ENCODE measurements at regions of chr7 and their contacts with region 1.

Region 1: GRCh38 chr7:113664867-113665266 is 253.9 kb downstream of the PPP1R3A start:
- DNase-seq: no peak
- ATAC-seq: no peak
- H3K4me3 ChIP-seq: no peak overlapping the region
- H3K4me3 Mint-ChIP-seq: no peak overlapping the region
- H3K27ac ChIP-seq: no peak overlapping the region
- H3K27ac Mint-ChIP-seq: no peak overlapping the region
- H3K4me1 ChIP-seq: no peaks in the 10 kb centered on the region
- H3K4me1 Mint-ChIP-seq: no peaks in the 10 kb centered on the region
- H3K27me3 ChIP-seq: no peaks in the 10 kb centered on the region
- H3K27me3 Mint-ChIP-seq: no peaks in the 10 kb centered on the region

Region 2: DNA sequence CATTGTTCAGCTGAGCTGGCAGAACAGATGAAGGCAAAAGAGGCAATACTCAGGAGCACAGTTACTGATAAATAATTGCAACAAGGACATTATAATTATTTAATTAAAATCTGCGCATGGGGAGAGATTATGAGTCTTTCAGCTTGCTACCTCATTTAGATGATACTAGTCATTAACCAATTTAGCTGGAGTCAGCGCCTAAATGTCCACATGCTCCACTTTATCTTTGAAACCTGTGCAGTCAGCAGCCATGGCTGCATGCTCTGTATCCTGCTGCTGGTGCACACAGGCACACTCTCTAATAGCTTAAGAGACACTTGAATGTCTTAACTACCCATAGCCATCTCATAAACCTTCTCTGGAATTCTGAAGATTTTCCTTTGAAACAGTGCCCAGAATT is 57.1 kb after region 1 on chr7:
- CTCF ChIA-PET with region 1: no interaction called
- POLR2A ChIA-PET with region 1: no interaction called
- intact Hi-C with region 1: loop called in 1 of 2 experiments (anchors 10 kb)
- DNase-seq: no peak
- ATAC-seq: no peak
- H3K4me3 ChIP-seq: no peak overlapping the region
- H3K4me3 Mint-ChIP-seq: no peak overlapping the region
- H3K27ac ChIP-seq: no peak overlapping the region
- H3K27ac Mint-ChIP-seq: no peak overlapping the region
- H3K4me1 ChIP-seq: no peaks in the 10 kb centered on the region
- H3K4me1 Mint-ChIP-seq: no peaks in the 10 kb centered on the region
- H3K27me3 ChIP-seq: no peaks in the 10 kb centered on the region
- H3K27me3 Mint-ChIP-seq: no peaks in the 10 kb centered on the region